ENCODE measurements at regions of chrX and their contacts with region 1.

Region 1: DNA sequence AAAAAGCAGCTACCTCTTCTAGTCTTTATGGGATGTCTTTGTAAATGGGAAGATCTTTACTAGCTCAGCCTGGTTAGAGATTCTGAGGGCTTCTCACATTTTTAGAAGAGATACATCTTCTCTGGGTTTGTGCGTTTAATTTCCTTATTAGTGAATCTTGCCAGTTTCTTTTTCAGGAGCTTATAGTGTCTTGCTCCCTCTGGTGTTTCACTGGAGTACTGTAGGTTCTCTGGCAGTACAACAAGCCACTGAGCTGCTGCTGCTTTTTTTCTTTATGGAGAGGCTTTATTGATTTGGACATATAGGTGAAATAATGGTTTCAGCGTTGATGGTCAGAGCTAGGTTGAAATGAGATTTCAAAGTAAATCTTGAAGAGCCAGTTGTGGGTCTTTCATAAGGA is 82.9 kb downstream of the LAS1L start:
- DNase-seq: peak; percentile 25
- H3K4me3 Mint-ChIP-seq: no peak overlapping the region
- H3K27ac Mint-ChIP-seq: no peak overlapping the region
- H3K4me1 Mint-ChIP-seq: no peaks in the 10 kb centered on the region
- H3K27me3 Mint-ChIP-seq: no peaks in the 10 kb centered on the region
- CTCF ChIP-seq: no peak

Region 2: DNA sequence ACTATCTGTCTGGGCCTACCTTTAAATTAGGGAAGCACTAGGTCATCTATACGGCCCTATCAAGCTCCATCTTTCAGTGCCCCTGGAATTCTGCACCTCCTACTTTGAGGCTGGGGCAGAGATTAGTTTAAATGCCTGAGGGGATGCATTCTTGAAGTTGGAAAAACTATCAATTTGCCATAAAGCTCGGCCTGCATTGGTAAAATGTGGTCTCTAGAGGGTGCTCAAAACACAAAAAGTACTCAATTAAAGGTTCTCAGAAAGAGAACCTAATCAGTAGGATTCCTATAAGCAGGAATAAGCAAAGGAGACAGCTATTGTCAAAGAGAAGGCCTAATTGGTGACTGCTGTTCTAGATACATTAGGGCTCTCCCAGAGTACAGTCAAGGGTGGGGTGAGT is 1357.9 kb before region 1 on chrX:
- CTCF ChIA-PET with region 1: interaction called, 5 read pairs
- intact Hi-C with region 1: loop called (anchors 5 kb)
- DNase-seq: no peak
- H3K4me3 Mint-ChIP-seq: no peak overlapping the region
- H3K27ac Mint-ChIP-seq: no peak overlapping the region
- H3K4me1 Mint-ChIP-seq: no peaks in the 10 kb centered on the region
- H3K27me3 Mint-ChIP-seq: no peaks in the 10 kb centered on the region
- CTCF ChIP-seq: no peak

Region 3: DNA sequence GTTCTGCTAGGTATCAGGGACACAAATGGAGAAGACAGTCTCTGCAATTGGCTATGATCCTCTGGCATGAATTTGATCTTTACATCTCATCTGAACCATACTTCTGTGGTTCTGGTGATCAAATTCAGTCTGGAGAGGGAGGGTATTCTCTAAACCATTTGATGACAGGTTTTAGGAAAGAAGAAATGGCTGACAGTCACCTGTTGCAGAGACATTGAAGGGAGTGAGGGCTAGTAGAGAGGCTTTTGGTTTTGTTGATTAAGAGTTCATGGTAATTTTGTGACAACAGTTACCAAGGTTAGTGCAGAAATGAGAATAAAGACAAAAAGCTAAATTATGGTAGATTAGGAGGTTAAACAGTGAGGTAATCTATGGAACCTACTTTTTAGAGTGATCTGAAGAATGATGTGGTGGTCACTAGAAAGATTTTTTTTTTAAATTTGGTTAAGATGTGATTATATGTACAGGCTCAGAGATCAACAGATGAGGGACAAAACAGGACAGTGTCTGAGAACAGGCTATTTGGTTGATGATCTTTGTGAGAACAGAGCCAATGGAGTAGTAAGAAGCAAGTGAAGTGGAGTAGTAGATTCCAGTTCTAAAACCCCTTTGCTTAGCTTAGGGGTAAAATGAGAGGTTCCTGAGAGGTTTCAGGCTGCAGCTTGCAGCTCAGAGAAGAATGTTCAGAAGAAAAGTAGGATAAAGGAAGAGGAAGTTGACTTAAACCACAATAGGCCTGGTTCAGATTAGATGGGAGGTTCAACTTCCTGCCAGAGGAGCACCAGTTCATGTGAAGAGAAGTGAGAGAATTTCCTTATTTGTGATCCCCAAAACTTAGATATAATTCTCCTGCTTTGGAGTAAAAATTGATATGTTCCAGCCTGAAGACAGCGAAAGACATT is 553.5 kb after region 1 on chrX:
- CTCF ChIA-PET with region 1: no interaction called
- intact Hi-C with region 1: no loop called
- DNase-seq: no peak
- H3K4me3 Mint-ChIP-seq: no peak overlapping the region
- H3K27ac Mint-ChIP-seq: no peak overlapping the region
- H3K4me1 Mint-ChIP-seq: no peaks in the 10 kb centered on the region
- H3K27me3 Mint-ChIP-seq: no peaks in the 10 kb centered on the region
- CTCF ChIP-seq: no peak

Measured in Calu3 (cell line).